ENCODE measurements at regions of chr4 and their contacts with region 1.

Region 1: DNA sequence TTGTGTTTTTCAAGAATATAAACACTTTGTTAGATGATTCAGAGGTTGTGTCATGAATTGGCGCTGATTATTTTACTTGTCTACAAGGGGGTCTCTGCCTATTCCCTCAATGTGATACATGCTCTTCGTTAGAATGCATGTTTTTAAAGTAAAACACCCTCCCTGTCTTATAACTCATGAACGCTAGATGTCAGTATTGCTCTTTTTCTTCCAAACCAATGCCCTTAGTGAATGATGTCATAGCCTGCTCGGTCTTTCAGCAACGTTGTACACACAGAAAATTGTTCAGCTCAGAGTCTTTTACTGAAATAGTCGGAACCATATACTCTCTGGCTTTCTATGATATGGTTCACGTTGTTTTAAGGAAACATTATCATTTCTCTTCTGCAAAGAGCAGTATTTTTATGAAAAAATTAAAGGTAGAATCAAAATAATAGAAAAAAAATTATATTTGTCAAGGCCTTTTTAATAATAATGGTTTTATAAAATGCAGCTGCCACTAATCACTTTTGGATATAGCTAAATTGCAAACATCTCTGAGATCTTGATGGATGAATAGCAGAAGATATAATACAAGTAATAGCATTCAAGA is 292.9 kb downstream of the TLL1 start:
- DNase-seq: peak; percentile 36
- ATAC-seq: peak; percentile 94
- H3K4me3 ChIP-seq: no peak overlapping the region
- H3K27ac ChIP-seq: no peak overlapping the region
- H3K4me1 ChIP-seq: no peaks in the 10 kb centered on the region
- H3K27me3 ChIP-seq: no peaks in the 10 kb centered on the region
- CTCF ChIP-seq: peak; percentile 64 to 84 (median 77); a peak in 5 of 6 replicates
- EP300 ChIP-seq: no peak
- POLR2A ChIP-seq: no peak
- RAD21 ChIP-seq: peak; percentile 95

Region 2: GRCh38 chr4:166252487-166253402 is 86.8 kb after region 1 on chr4:
- CTCF ChIA-PET with region 1: no interaction called
- POLR2A ChIA-PET with region 1: no interaction called
- RAD21 ChIA-PET with region 1: no interaction called
- SMC1A ChIA-PET with region 1: no interaction called
- in situ Hi-C with region 1: no loop called
- intact Hi-C with region 1: loop called (anchors 5 kb)
- DNase-seq: no peak
- ATAC-seq: no peak
- H3K4me3 ChIP-seq: no peak overlapping the region
- H3K27ac ChIP-seq: no peak overlapping the region
- H3K4me1 ChIP-seq: no peaks in the 10 kb centered on the region
- H3K27me3 ChIP-seq: no peaks in the 10 kb centered on the region
- CTCF ChIP-seq: peak; percentile 20 to 44 (median 23); a peak in 4 of 6 replicates
- EP300 ChIP-seq: no peak
- POLR2A ChIP-seq: no peak
- RAD21 ChIP-seq: peak; percentile 29; the same call in 1 of the 2 replicates

Region 3: DNA sequence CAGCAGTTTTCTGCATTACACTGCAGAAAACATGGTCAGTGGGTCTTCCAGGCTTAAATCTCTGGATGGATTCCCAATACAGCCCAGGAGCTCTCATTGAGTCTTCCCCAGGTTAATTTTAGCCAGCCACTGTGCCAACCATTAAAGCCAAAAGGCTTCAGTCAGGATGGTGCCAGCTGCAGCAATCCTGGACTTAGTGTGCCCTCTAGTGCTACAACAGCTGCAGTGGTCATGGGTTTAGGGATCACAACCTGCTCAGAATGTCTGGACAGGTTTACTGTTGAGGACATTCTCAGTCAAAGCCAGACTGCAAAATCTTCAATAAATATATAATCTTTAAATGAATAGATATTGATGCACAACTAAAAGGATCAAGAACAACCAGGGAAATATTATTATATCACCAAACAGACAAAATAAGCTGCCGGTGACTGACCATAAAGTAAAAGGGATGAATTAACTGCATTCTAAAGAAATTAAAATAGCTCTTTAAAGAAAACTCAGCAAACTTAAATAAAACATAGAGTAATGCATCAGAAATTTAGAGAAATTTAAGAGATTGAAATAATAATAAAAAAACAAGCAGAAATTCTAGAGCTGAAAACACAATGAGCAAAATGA is 428.5 kb after region 1 on chr4:
- CTCF ChIA-PET with region 1: interaction called, 32 read pairs
- POLR2A ChIA-PET with region 1: no interaction called
- RAD21 ChIA-PET with region 1: interaction called, 14 read pairs
- SMC1A ChIA-PET with region 1: interaction called, 22 read pairs
- in situ Hi-C with region 1: loop called (anchors 5 kb)
- intact Hi-C with region 1: loop called (anchors 1 kb)
- DNase-seq: peak; percentile 13
- ATAC-seq: peak; percentile 100
- H3K4me3 ChIP-seq: no peak overlapping the region
- H3K27ac ChIP-seq: no peak overlapping the region
- H3K4me1 ChIP-seq: no peaks in the 10 kb centered on the region
- H3K27me3 ChIP-seq: no peaks in the 10 kb centered on the region
- CTCF ChIP-seq: peak; percentile 57 to 73 (median 71)
- EP300 ChIP-seq: no peak
- POLR2A ChIP-seq: no peak
- RAD21 ChIP-seq: peak; percentile 83

Region 4: DNA sequence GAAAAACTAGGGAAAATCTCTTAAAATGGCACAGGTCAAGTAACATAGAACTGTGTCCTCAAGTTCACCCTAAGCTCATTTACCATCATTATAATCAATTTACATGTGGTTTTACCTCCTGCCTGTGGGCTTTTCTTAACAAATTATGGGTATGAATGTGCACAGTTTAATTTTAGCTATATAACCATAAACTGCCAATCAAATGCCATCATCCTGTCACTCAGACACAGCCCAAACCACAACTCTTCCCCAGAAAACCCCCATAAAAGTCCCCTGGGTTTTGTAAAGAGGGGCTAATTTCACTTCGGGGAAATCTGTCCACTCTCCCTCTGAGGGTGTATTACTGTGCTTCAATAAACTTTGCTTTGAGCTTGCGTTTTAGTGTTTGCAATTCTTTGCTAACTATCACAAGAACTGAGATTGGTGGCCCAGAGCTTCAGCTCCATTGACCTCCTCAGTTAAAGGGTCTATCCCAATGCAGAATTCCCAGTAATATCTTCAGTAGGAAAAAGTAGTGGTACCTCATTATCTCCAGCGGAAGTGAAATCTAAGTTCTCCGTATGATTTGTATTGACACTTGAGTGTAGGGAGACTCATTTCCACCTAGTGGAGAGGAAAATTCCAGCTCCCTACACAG is 673.8 kb after region 1 on chr4:
- CTCF ChIA-PET with region 1: no interaction called
- POLR2A ChIA-PET with region 1: no interaction called
- RAD21 ChIA-PET with region 1: interaction called, 3 read pairs
- SMC1A ChIA-PET with region 1: no interaction called
- in situ Hi-C with region 1: no loop called
- intact Hi-C with region 1: loop called (anchors 5 kb)
- DNase-seq: peak; percentile 85
- ATAC-seq: peak; percentile 90
- H3K4me3 ChIP-seq: peak overlapping the region; percentile 23; the same call in 1 of the 2 replicates
- H3K27ac ChIP-seq: peak overlapping the region; percentile 72
- H3K4me1 ChIP-seq: no peaks in the 10 kb centered on the region
- H3K27me3 ChIP-seq: no peaks in the 10 kb centered on the region
- CTCF ChIP-seq: 0 out of 6 replicates have a peak, but pooled peaks of 1 of the 3 experiments have one; percentile 11
- EP300 ChIP-seq: peak; percentile 93 to 97
- POLR2A ChIP-seq: no peak
- RAD21 ChIP-seq: peak; percentile 28; the same call in 1 of the 2 replicates

Region 5: DNA sequence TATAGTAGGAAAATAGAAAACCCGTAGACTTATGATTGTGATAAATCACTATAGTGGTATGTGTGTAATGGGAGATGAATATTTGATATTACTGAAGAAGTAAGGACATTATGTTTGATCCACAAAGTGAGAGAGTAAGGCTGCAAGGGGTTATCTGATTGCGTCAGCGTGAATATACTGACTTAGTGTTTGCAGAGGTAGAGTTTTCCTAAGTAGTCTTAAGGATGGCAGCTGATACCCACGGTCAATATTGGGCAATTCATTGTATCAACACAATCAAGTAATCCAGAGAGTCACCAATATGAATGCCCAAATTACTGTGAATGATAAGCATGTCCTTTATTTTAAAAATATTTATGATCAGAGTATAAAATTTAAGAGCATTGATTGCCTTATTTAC is 984.7 kb after region 1 on chr4:
- CTCF ChIA-PET with region 1: no interaction called
- POLR2A ChIA-PET with region 1: no interaction called
- RAD21 ChIA-PET with region 1: no interaction called
- SMC1A ChIA-PET with region 1: no interaction called
- in situ Hi-C with region 1: no loop called
- intact Hi-C with region 1: loop called (anchors 10 kb)
- DNase-seq: no peak
- ATAC-seq: no peak
- H3K4me3 ChIP-seq: no peak overlapping the region
- H3K27ac ChIP-seq: no peak overlapping the region
- H3K4me1 ChIP-seq: no peaks in the 10 kb centered on the region
- H3K27me3 ChIP-seq: no peaks in the 10 kb centered on the region
- CTCF ChIP-seq: no peak
- EP300 ChIP-seq: no peak
- POLR2A ChIP-seq: no peak
- RAD21 ChIP-seq: no peak

Region 6: DNA sequence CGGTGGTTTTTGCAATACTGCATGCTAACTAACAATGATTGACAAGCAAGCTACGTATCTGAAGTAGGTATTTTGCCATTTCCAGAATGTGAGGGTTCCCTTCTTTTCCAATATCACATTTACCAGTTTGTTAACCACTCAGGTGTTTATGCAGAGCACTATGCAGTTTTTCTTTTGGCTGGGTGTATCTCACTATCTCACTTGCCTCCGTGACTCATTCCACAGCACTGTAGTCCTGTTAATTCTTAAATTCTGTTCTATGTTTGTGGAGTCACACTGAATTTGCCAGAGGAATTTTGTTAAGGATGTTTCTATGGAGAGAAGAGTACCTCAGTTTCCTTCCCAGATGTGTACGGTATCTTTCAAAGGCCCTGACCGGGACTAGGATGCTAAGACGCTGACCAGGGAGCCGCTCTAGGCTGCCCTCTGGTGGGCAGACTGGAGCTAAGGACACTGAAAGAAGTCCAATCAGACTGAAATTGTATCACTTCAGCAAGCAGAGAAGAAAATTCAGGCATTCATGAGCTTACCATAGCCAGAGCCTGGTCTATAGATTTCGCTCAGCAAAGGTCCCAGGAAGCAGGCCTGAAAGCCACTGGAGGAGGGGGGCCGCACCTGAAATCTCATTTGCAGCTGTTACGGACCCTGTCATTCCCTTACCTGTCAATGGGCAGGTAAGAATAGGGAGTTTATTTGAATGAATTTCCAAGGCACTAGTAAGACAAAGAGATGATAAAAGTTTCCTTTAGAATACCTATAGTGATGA is 1456.7 kb after region 1 on chr4:
- CTCF ChIA-PET with region 1: interaction called, 14 read pairs
- POLR2A ChIA-PET with region 1: no interaction called
- RAD21 ChIA-PET with region 1: no interaction called
- SMC1A ChIA-PET with region 1: interaction called, 11 read pairs
- in situ Hi-C with region 1: loop called (anchors 10 kb)
- intact Hi-C with region 1: loop called (anchors 1 kb)
- DNase-seq: no peak
- ATAC-seq: peak; percentile 99
- H3K4me3 ChIP-seq: no peak overlapping the region
- H3K27ac ChIP-seq: no peak overlapping the region
- H3K4me1 ChIP-seq: no peaks in the 10 kb centered on the region
- H3K27me3 ChIP-seq: no peaks in the 10 kb centered on the region
- CTCF ChIP-seq: peak; percentile 63 to 82 (median 81)
- EP300 ChIP-seq: no peak
- POLR2A ChIP-seq: no peak
- RAD21 ChIP-seq: peak; percentile 70

Region 7: GRCh38 chr4:168153596-168154440 is 1987.9 kb after region 1 on chr4:
- CTCF ChIA-PET with region 1: interaction called, 5 read pairs
- POLR2A ChIA-PET with region 1: no interaction called
- RAD21 ChIA-PET with region 1: interaction called, 5 read pairs
- SMC1A ChIA-PET with region 1: interaction called, 8 read pairs
- in situ Hi-C with region 1: no loop called
- intact Hi-C with region 1: loop called (anchors 5 kb)
- DNase-seq: peak; percentile 4
- ATAC-seq: peak; percentile 95
- H3K4me3 ChIP-seq: no peak overlapping the region
- H3K27ac ChIP-seq: no peak overlapping the region
- H3K4me1 ChIP-seq: no peaks in the 10 kb centered on the region
- H3K27me3 ChIP-seq: no peaks in the 10 kb centered on the region
- CTCF ChIP-seq: peak; percentile 56 to 71 (median 62)
- EP300 ChIP-seq: no peak
- POLR2A ChIP-seq: no peak
- RAD21 ChIP-seq: peak; percentile 63

Measured in GM12878 (cell line).